WTC11 (cell line): ENCODE measurements at regions of chr10 and their contacts with region 1.

Region 1: DNA sequence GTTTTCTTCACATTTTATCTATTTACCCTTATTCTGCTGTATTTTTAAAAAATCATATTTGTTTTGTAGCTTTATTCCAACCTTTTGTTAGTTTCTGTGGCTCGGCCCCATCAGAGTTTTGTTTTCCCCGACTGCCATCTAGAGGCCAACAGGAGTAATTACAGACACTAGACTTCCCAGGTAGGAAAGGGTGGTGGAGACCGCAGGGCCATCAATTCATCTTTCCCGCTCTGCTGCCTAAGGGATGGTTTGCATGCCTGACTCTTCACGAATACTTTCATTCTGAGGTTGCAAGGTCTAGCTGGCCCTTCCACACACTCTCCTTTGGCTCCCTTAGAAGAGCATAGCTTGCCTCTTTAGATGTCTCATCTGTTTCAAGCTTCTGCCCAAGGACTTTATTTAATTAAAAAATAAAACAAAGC is 38.3 kb downstream of the LYZL2 start:
- DNase-seq: peak; percentile 37
- ATAC-seq: peak; percentile 72
- H3K4me3 Mint-ChIP-seq: no peak overlapping the region
- H3K27ac Mint-ChIP-seq: no peak overlapping the region
- H3K4me1 Mint-ChIP-seq: peaks cover 25% of the 10 kb centered on the region
- H3K27me3 Mint-ChIP-seq: peaks cover 49% of the 10 kb centered on the region
- CTCF ChIP-seq: peak; percentile 70

Region 2: DNA sequence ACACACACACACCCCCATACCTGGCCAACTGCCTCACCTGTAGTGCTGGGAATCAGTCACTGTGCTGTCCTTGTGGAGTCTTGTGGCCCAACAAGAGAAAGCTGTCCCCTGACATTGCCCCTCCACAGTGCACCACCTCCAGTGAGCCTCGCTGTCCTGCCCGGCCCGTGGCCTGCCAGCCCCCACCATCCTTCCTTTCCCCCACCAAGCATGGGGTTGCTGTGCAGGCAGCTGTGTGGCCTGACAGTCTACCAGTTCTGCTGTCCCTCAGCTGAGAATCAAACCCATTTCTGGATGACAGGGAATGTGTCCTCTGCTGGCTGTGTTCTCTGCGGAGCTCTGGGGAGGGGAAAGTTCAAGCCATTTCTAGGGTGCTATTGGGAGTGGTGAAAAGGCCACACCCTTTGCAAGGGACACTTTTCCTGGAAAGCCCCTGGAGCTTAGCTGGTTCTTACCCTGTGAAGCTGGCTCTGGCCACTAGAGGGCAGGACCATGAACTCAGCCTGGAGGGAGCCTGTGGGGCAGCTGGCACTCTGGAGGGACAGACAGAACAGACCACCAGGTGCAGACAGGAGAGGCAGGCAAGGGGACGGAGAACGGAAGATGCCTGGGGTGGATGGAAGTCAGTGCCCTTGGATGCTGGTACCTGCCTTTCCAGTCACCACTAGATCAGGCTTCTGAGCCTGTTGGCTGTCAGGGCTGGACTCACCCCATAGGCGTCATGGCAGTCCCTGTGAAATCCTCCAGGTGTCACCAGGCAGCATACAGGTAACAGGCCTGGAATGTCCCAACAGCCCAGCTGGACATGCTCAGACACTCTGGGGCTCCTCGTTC is 231.7 kb before region 1 on chr10:
- CTCF ChIA-PET with region 1: interaction called, 43 read pairs
- POLR2A ChIA-PET with region 1: no interaction called
- DNase-seq: peak; percentile 85
- ATAC-seq: peak; percentile 91
- H3K4me3 Mint-ChIP-seq: no peak overlapping the region
- H3K27ac Mint-ChIP-seq: no peak overlapping the region
- H3K4me1 Mint-ChIP-seq: peaks cover 9% of the 10 kb centered on the region
- H3K27me3 Mint-ChIP-seq: no peaks in the 10 kb centered on the region; the same call in none of the 2 replicates
- CTCF ChIP-seq: peak; percentile 95

Region 3: DNA sequence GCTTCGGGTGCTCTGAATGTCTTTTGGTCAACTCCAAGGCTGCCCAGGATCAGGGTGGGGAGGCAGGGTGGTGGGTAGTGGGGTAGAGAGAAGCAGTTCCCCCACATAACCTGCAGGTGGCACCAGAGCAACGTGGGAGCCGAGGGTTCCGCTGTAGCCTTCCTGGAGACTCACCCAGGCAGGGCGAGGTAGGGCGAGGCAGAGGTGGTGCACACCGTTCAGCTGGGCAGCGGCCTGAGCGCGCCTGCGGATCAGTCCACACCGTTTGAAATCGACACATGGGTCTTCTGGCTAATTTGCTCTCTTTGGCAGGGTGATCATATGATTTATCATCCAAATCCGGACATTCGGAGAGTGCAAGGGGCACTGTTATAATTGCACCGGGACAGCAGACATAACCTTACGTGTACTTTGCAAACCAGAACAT is 198.7 kb before region 1 on chr10:
- CTCF ChIA-PET with region 1: interaction called, 32 read pairs
- POLR2A ChIA-PET with region 1: no interaction called
- DNase-seq: peak; percentile 85
- ATAC-seq: peak; percentile 100
- H3K4me3 Mint-ChIP-seq: peak overlapping the region; percentile 37; the same call in 1 of the 2 replicates
- H3K27ac Mint-ChIP-seq: no peak overlapping the region
- H3K4me1 Mint-ChIP-seq: peaks cover 4% of the 10 kb centered on the region; the same call in 1 of the 2 replicates
- H3K27me3 Mint-ChIP-seq: no peaks in the 10 kb centered on the region; the same call in 1 of the 2 replicates
- CTCF ChIP-seq: peak; percentile 93

Region 4: GRCh38 chr10:30422981-30423654 is 168.1 kb before region 1 on chr10:
- CTCF ChIA-PET with region 1: interaction called, 10 read pairs
- POLR2A ChIA-PET with region 1: no interaction called
- DNase-seq: peak; percentile 46
- ATAC-seq: peak; percentile 89
- H3K4me3 Mint-ChIP-seq: 0 out of 2 replicates have a peak overlapping the region, but pooled peaks have one; percentile 8
- H3K27ac Mint-ChIP-seq: peak overlapping the region; percentile 94
- H3K4me1 Mint-ChIP-seq: peaks cover 41% of the 10 kb centered on the region
- H3K27me3 Mint-ChIP-seq: no peaks in the 10 kb centered on the region
- CTCF ChIP-seq: no peak

Region 5: DNA sequence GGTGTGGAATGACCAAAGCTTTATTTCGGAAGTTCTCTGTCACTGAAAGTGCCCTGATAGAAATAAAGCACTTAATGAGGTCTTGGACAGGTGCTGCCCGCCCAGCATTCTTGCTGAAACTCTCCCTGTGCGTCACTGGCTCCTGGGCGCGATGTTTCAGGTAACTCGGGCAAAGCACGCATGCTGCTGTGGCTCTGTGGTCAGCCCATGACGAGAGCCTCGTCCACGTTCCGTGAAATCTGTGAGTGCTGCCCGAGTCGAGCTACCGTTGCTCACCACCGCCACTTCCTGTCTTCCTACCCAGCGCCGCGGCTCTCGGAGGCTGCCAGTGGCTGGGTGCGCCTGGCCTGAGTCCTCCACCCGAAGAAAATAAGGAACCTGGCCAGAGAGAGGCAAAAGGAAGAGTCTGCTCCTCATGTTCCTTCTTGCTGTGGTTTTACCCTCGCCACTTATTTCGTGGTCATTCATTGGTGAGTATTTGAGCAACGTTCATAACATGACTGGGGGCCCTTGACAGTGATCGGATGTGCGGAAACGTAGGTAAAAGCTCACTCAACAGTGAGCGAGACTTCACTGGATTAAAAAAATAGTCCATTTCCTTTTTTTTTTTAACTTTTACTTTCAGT is 61.8 kb before region 1 on chr10:
- CTCF ChIA-PET with region 1: interaction called, 11 read pairs
- POLR2A ChIA-PET with region 1: no interaction called
- DNase-seq: peak; percentile 12
- ATAC-seq: no peak
- H3K4me3 Mint-ChIP-seq: no peak overlapping the region
- H3K27ac Mint-ChIP-seq: 0 out of 2 replicates have a peak overlapping the region, but pooled peaks have one; percentile 47
- H3K4me1 Mint-ChIP-seq: peaks cover 37% of the 10 kb centered on the region
- H3K27me3 Mint-ChIP-seq: no peaks in the 10 kb centered on the region
- CTCF ChIP-seq: no peak

Region 6: DNA sequence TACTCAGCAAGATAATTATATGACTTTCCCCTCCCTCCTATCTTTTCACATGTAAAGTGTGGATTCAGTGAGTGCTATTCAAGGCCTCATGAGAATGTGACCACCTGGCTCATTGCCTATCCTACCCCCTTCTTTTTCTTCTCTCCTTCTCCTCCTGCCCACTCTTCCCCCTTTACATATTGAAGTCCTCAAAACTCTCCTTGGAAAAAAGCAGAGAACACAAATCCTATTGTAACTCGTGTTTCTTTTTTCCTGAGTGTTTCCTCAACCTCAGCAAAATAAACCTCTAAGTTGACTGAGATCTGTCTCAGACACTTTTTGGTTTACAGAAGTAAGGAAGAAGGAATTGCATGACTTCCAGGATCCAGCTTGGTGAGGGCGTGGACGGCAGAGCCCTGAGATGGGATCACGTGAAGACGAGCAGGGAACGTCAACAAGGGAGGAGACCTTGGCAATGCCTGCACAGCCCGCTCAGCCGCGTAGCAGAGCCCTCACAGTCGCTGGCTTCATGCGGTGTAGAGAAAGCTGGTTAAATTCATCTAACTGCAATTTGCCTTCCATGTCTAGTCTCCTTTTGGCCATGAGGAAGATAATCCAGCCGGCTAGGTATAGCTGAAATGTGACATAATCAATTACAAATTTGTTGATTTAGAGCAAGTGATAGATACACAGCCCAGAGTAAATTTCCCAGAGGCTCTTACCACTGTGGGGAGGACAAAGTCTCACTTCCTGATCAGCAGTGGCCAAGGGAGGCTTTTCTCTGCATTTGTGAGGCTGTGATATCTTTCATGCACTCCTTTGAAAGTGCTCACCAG is 37.4 kb before region 1 on chr10:
- CTCF ChIA-PET with region 1: interaction called, 16 read pairs
- POLR2A ChIA-PET with region 1: no interaction called
- DNase-seq: peak; percentile 65
- ATAC-seq: peak; percentile 89
- H3K4me3 Mint-ChIP-seq: peak overlapping the region; percentile 54
- H3K27ac Mint-ChIP-seq: peak overlapping the region; percentile 98
- H3K4me1 Mint-ChIP-seq: peaks cover 44% of the 10 kb centered on the region
- H3K27me3 Mint-ChIP-seq: no peaks in the 10 kb centered on the region
- CTCF ChIP-seq: no peak

Region 7: DNA sequence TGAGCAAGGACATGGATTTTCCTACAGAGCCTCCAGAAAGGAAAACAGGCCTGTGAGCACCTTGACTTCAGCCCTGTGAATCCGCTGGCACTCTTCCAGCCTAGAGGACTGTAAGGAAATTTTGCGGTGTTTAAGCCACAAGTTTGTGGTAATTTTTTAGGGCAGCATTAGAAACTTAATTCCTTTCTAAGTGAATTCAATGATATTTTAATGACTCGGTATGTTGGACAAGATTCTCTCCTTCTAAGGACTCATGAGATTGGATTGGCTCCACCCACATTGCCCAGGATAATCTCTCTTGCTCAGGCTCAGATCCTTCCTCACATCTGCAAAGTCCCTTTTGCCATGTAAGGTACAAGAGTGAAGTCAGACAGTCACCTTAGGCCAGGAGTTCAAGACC is 33.8 kb after region 1 on chr10:
- CTCF ChIA-PET with region 1: no interaction called
- POLR2A ChIA-PET with region 1: no interaction called
- DNase-seq: no peak
- ATAC-seq: no peak
- H3K4me3 Mint-ChIP-seq: no peak overlapping the region
- H3K27ac Mint-ChIP-seq: no peak overlapping the region; the same call in 1 of the 2 replicates
- H3K4me1 Mint-ChIP-seq: no peaks in the 10 kb centered on the region
- H3K27me3 Mint-ChIP-seq: no peaks in the 10 kb centered on the region; the same call in 1 of the 2 replicates
- CTCF ChIP-seq: no peak

Region 8: DNA sequence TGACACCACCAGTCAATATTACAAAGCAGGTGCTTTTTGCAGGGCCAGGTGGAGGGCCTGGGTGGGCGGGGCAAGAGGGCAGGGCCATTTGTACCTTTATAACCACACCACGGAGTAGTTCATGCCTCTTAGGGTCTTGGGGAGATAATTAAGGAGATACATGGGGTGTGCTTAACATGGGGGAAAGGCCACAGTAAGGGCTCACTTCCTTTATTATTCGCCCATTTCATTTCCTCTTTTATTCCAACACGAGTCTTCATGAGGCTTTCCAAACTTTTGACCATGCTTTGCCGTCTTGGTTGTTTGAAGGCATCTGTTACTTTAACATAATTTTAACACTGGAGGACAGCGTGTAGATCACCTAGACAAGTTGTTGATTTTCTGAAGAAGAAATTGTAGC is 71.6 kb after region 1 on chr10:
- CTCF ChIA-PET with region 1: no interaction called
- POLR2A ChIA-PET with region 1: no interaction called
- DNase-seq: no peak
- ATAC-seq: no peak
- H3K4me3 Mint-ChIP-seq: no peak overlapping the region
- H3K27ac Mint-ChIP-seq: no peak overlapping the region
- H3K4me1 Mint-ChIP-seq: peaks cover 26% of the 10 kb centered on the region
- H3K27me3 Mint-ChIP-seq: no peaks in the 10 kb centered on the region; the same call in 1 of the 2 replicates
- CTCF ChIP-seq: no peak